Gastrocnemius medialis (tissue), 4 donors: ENCODE measurements at regions of chr20 and their contacts with region 1.

Region 1: GRCh38 chr20:41475507-41475906 is 108.9 kb upstream of the EMILIN3 start:
- DNase-seq: no peak
- ATAC-seq: peak in 1 of 2 donors; percentile 23
- H3K4me3 ChIP-seq: no peak overlapping the region
- H3K27ac ChIP-seq: peak overlapping the region; percentile 55 to 77 (median 68)
- H3K4me1 ChIP-seq: peaks cover 26 to 33% of the 10 kb centered on the region in 2 donors
- H3K27me3 ChIP-seq: no peaks in the 10 kb centered on the region
- CTCF ChIP-seq: no peak
- POLR2A ChIP-seq: no peak

Region 2: DNA sequence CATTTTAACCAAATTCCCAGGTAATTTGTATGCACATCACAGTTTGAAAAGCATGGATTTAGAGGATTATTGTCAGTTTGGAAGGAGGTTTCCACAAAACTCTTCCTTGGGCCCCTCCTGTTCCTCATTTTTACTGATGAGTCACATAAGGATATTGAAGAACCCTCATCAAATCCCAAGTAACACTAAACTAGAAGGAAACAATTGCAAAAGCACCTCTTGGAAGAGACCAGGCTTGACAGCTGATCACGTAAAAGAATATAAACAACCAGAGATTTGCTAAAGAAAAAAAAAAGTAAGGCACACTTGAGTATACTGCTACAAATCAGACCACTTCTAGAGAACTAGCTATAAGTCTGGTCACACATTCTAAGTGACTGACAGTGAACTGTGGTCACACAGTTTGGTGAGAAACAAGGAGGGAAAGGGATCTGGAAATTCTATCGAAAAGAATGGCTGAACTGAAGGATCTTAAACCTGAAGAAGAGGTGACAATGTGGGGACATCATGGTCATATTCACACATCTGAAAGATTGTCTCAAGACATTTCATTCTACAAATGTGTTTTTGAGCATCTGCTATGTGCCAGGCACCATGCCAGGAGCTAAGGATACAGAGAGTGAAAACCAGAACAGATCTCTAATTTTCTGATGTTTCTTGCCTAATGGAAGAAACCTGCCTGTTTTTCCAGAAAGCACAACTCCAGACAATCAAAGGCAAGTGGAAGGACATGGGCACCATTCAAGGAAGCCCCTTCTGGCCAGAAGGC is 182.1 kb before region 1 on chr20:
- in situ Hi-C with region 1: no loop called
- intact Hi-C with region 1: no loop called
- DNase-seq: no peak
- ATAC-seq: peak; percentile 76 to 84
- H3K4me3 ChIP-seq: no peak overlapping the region
- H3K27ac ChIP-seq: peak overlapping the region; percentile 50 to 65 (median 56)
- H3K4me1 ChIP-seq: peaks cover 33 to 49% of the 10 kb centered on the region in 2 donors
- H3K27me3 ChIP-seq: no peaks in the 10 kb centered on the region
- CTCF ChIP-seq: no peak
- POLR2A ChIP-seq: no peak

Region 3: DNA sequence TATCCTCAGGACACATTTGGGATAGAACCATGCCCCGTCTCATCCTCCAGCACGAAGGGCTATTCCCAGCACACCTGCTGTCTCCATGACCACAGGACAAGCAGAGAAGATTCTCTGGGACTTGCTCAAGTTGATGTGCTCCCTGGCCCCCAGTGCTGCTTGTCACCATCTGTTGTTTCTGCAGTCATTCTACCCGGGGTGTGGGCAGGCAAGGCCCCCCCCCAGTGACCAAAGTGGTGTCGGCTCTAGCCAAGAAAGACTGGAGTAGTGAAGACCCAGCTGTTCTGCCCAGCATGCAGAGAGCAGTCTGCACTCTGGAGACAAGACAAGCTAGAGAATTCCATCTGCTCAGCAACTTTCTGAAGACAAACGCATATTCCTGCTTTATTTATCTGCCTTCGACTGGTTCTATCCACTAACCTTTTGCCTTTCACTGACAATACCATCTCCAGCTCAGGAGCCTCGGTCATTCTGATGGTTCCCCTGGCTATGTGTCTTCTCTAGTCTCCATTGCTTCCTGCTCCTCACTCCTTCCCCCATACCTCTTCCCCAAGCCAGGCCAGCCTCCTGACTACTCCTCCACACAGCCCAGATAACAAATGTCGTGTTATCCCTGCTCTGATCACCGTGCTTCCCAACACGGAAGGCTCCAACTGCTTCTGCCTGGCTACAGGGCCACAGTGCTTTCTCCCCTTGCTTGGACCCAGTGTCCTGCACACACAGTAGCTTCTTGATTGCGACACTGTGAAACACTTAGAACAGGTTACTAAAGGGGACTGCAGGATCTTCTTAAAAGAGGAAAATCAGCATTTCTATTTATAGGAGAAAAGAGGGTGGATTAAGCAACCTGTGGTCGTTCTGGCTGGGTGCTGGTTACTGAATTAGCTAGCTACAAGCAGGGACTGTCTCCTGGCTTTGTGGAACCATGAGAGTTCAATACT is 22.2 kb before region 1 on chr20:
- in situ Hi-C with region 1: no loop called
- intact Hi-C with region 1: loop called (anchors 2 kb)
- DNase-seq: peak; percentile 65 to 71
- ATAC-seq: peak; percentile 82 to 83
- H3K4me3 ChIP-seq: peak overlapping the region in 1 of 4 donors; percentile 2
- H3K27ac ChIP-seq: peak overlapping the region; percentile 74 to 85 (median 80)
- H3K4me1 ChIP-seq: peaks cover 25 to 44% of the 10 kb centered on the region in 2 donors
- H3K27me3 ChIP-seq: no peaks in the 10 kb centered on the region
- CTCF ChIP-seq: no peak
- POLR2A ChIP-seq: no peak